ENCODE measurements at regions of chr9 and their contacts with region 1.

Region 1: GRCh38 chr9:113957821-113958341 is 81.8 kb downstream of the ZNF618 start:
- DNase-seq: no peak
- H3K4me3 ChIP-seq: no peak overlapping the region
- H3K4me3 Mint-ChIP-seq: no peak overlapping the region
- H3K27ac ChIP-seq: no peak overlapping the region
- H3K27ac Mint-ChIP-seq: no peak overlapping the region
- H3K4me1 ChIP-seq: peaks cover 26 to 36% of the 10 kb centered on the region in 2 donors
- H3K4me1 Mint-ChIP-seq: peaks cover 44% of the 10 kb centered on the region
- H3K27me3 ChIP-seq: no peaks in the 10 kb centered on the region
- H3K27me3 Mint-ChIP-seq: no peaks in the 10 kb centered on the region
- CTCF ChIP-seq: no peak

Region 2: GRCh38 chr9:113798062-113799030 is 159.5 kb before region 1 on chr9:
- intact Hi-C with region 1: loop called (anchors 10 kb)
- DNase-seq: no peak
- H3K4me3 ChIP-seq: no peak overlapping the region
- H3K4me3 Mint-ChIP-seq: no peak overlapping the region
- H3K27ac ChIP-seq: no peak overlapping the region
- H3K27ac Mint-ChIP-seq: no peak overlapping the region
- H3K4me1 ChIP-seq: no peaks in the 10 kb centered on the region
- H3K4me1 Mint-ChIP-seq: no peaks in the 10 kb centered on the region
- H3K27me3 ChIP-seq: no peaks in the 10 kb centered on the region
- H3K27me3 Mint-ChIP-seq: peaks cover 0 to 10% (median 8%) of the 10 kb centered on the region in 3 donors
- CTCF ChIP-seq: no peak